Tibial artery (tissue), 4 donors: ENCODE measurements at regions of chr15 and their contacts with region 1.

Region 1: GRCh38 chr15:37100109-37100965 is at the start of gene MEIS2:
- DNase-seq: peak; percentile 92 to 94
- H3K4me3 ChIP-seq: peak within 1 kb of the TSS; percentile 85 to 90
- H3K27ac ChIP-seq: peak within 1 kb of the TSS; percentile 91 to 95
- H3K4me1 ChIP-seq: peaks cover 0 to 13% (median 5%) of the 10 kb centered on the region in 4 donors
- H3K27me3 ChIP-seq: no peaks in the 10 kb centered on the region
- CTCF ChIP-seq: no peak

Region 2: GRCh38 chr15:35533130-35534110 is 1566.9 kb before region 1 on chr15:
- intact Hi-C with region 1: loop called (anchors 5 kb)
- DNase-seq: no peak
- H3K4me3 ChIP-seq: no peak overlapping the region
- H3K27ac ChIP-seq: peak overlapping the region in 1 of 2 donors; percentile 35
- H3K4me1 ChIP-seq: peaks cover 0 to 24% (median 0%) of the 10 kb centered on the region in 4 donors
- H3K27me3 ChIP-seq: no peaks in the 10 kb centered on the region
- CTCF ChIP-seq: no peak